CD8-positive, alpha-beta T cell (primary cell): ENCODE measurements at regions of chr1 and their contacts with region 1.

Region 1: DNA sequence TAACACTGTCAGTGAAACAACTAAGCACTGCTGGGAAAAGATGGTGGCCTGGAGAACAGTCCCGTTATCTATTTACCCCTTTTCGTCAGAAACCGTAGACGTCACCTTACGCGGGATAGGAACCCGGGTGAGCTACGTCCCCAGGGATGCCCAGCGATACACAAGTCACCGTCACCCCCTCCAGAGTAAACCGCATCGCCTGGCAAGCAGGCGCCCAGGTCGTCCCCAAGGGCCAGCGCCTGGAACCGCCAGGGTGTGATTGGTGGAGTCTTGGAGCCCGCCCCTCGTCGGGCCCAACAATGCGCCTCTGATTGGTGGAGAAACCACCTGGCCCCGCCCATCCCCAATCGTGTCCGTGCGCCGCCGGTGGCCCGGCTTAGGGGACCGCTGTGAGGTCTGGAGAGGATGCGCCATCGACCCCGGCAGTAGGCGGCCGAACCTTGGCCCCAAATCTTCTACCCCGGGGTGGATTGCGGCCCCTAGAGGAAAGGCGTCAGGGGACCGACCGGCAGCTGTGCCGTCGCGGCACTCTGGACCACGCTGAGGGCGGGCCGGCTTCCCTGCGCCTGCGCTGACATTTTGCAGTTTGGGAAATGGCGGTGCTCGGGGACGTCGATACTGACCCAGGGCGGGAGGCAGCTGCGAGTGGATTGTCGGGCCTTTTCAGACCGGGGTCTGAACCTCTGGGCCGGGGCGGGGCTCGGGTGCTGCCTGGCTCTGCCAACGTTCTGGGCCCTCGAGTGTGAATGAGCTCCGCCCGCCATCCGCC is 34.4 kb downstream of the SLC2A1 start:
- DNase-seq: peak; percentile 78 to 94 (median 91)
- ATAC-seq: peak; percentile 90
- H3K4me3 ChIP-seq: peak overlapping the region; percentile 90 to 96
- H3K4me3 Mint-ChIP-seq: peak overlapping the region; percentile 95
- H3K27ac ChIP-seq: peak overlapping the region; percentile 83 to 91
- H3K27ac Mint-ChIP-seq: peak overlapping the region; percentile 98
- H3K4me1 ChIP-seq: peaks cover 15% of the 10 kb centered on the region
- H3K4me1 Mint-ChIP-seq: peaks cover 35% of the 10 kb centered on the region
- H3K27me3 ChIP-seq: no peaks in the 10 kb centered on the region
- H3K27me3 Mint-ChIP-seq: no peaks in the 10 kb centered on the region
- CTCF ChIP-seq: no peak

Region 2: GRCh38 chr1:42462828-42463763 is 461.2 kb before region 1 on chr1 and contains the start of gene CCDC30:
- CTCF ChIA-PET with region 1: no interaction called
- POLR2A ChIA-PET with region 1: no interaction called
- intact Hi-C with region 1: loop called (anchors 5 to 10 kb)
- DNase-seq: peak; percentile 92 to 99 (median 94)
- ATAC-seq: peak; percentile 98
- H3K4me3 ChIP-seq: peak within 1 kb of the TSS; percentile 60 to 62
- H3K4me3 Mint-ChIP-seq: peak within 1 kb of the TSS; percentile 84
- H3K27ac ChIP-seq: peak within 1 kb of the TSS; percentile 70 to 83
- H3K27ac Mint-ChIP-seq: peak within 1 kb of the TSS; percentile 93
- H3K4me1 ChIP-seq: peaks cover 23% of the 10 kb centered on the region
- H3K4me1 Mint-ChIP-seq: peaks cover 40% of the 10 kb centered on the region
- H3K27me3 ChIP-seq: no peaks in the 10 kb centered on the region
- H3K27me3 Mint-ChIP-seq: no peaks in the 10 kb centered on the region
- CTCF ChIP-seq: no peak
- total RNA-seq, gene CCDC30: 2.5 to 2.8 TPM

Region 3: DNA sequence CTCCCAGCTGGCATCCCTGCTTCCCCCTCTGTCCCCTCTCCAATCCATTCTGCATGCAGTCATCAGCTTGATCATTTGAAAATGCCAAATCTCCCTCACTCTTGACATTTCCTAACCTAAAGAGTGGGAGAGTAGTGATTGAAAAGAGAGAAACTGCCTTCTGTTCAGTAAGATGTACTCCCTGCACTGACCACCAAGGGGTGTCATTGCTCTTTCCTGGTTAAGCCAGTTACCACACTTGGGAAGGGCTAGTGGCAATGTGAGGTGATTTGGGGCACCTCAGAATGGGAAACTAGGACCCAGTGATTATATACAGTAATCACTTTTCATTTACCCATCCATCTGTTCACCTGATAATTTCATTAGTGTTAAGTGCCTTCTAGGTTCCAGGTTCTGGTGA is 146.4 kb before region 1 on chr1:
- CTCF ChIA-PET with region 1: interaction called, 17 read pairs
- POLR2A ChIA-PET with region 1: no interaction called
- intact Hi-C with region 1: no loop called
- DNase-seq: peak in 5 of 9 experiments; percentile 21 to 52 (median 27)
- ATAC-seq: peak; percentile 68
- H3K4me3 ChIP-seq: no peak overlapping the region
- H3K4me3 Mint-ChIP-seq: no peak overlapping the region
- H3K27ac ChIP-seq: no peak overlapping the region
- H3K27ac Mint-ChIP-seq: no peak overlapping the region
- H3K4me1 ChIP-seq: no peaks in the 10 kb centered on the region
- H3K4me1 Mint-ChIP-seq: peaks cover 10% of the 10 kb centered on the region
- H3K27me3 ChIP-seq: no peaks in the 10 kb centered on the region
- H3K27me3 Mint-ChIP-seq: no peaks in the 10 kb centered on the region
- CTCF ChIP-seq: peak; percentile 57

Region 4: DNA sequence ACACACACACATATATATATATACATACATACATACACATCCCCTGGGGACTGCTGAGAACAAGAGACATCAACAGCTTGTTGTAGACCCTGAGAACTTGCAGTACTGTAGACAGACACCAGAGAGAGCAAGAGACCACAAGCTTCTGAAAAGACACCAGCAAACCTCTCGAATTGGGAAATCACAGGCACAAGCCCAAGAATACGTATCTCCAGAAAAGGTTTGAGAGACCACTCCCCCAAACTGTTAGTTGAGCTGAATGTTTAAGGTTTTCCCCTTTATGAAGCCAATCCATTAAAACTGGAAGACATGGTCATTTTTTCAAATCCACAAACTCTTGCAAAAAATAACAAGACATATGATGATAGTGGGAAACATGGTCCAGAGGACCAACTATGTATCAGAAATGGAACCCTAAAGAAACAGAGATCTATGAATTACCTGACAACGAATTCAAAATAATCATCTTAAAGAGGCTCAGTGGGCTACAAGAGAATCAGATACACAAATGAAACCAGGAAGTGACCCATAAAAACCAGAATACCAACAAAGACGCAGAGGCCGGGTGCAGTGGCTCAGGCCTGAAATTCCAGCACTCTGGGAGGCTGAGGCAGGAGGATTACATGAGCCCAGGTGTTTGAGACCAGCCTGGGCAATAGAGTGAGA is 10.7 kb before region 1 on chr1:
- CTCF ChIA-PET with region 1: interaction called, 62 read pairs
- POLR2A ChIA-PET with region 1: interaction called, 17 read pairs
- intact Hi-C with region 1: loop called in 1 of 2 experiments (anchors 1 kb)
- DNase-seq: peak in 6 of 9 experiments; percentile 45 to 87 (median 64)
- ATAC-seq: peak; percentile 99
- H3K4me3 ChIP-seq: no peak overlapping the region
- H3K4me3 Mint-ChIP-seq: no peak overlapping the region
- H3K27ac ChIP-seq: no peak overlapping the region
- H3K27ac Mint-ChIP-seq: no peak overlapping the region
- H3K4me1 ChIP-seq: no peaks in the 10 kb centered on the region
- H3K4me1 Mint-ChIP-seq: peaks cover 4% of the 10 kb centered on the region
- H3K27me3 ChIP-seq: no peaks in the 10 kb centered on the region
- H3K27me3 Mint-ChIP-seq: peaks cover 3% of the 10 kb centered on the region
- CTCF ChIP-seq: peak; percentile 85

Region 5: DNA sequence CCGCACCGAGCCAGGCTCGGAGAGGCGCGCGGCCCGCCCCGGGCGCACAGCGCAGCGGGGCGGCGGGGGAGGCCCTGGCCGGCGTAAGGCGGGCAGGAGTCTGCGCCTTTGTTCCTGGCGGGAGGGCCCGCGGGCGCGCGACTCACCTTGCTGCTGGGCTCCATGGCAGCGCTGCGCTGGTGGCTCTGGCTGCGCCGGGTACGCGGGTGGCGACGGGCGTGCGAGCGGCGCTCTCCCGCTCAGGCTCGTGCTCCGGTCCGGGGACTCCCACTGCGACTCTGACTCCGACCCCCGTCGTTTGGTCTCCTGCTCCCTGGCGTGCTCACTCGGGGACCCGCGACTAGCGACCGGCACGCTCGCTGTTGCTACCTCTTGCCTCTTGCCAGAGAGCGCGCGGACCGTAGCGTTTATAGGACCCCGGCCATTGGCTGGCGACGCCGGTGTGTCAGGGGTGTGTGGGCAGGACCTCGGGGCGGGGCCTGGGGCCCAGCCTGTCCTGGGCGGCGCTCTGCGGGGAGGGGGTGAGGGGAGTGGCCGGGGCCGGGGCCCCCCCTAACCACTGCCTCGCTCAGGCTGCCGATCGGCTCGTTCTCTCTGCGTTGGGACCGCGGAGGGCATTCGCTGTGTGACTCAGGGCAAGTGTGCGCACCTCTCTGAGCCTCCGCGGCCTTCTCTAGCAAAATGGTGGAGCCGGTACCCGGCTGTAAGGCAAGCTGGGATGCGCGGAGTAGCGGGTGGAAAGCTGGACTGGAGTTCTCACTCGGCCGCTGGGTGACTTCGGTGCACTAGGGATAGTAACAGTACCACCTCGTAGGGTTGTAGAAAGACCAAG is 34.4 kb after region 1 on chr1 and contains the start of gene SLC2A1:
- CTCF ChIA-PET with region 1: interaction called, 14 read pairs
- POLR2A ChIA-PET with region 1: interaction called, 7 read pairs
- intact Hi-C with region 1: loop called (anchors 1 kb)
- DNase-seq: peak; percentile 92 to 98 (median 96)
- ATAC-seq: peak; percentile 90
- H3K4me3 ChIP-seq: peak within 1 kb of the TSS; percentile 79 to 96
- H3K4me3 Mint-ChIP-seq: peak within 1 kb of the TSS; percentile 98
- H3K27ac ChIP-seq: peak within 1 kb of the TSS; percentile 76 to 86
- H3K27ac Mint-ChIP-seq: peak within 1 kb of the TSS; percentile 99
- H3K4me1 ChIP-seq: peaks cover 42% of the 10 kb centered on the region
- H3K4me1 Mint-ChIP-seq: peaks cover 51% of the 10 kb centered on the region
- H3K27me3 ChIP-seq: no peaks in the 10 kb centered on the region
- H3K27me3 Mint-ChIP-seq: no peaks in the 10 kb centered on the region
- CTCF ChIP-seq: no peak
- total RNA-seq, gene SLC2A1: 85.0 to 97.2 TPM

Region 6: DNA sequence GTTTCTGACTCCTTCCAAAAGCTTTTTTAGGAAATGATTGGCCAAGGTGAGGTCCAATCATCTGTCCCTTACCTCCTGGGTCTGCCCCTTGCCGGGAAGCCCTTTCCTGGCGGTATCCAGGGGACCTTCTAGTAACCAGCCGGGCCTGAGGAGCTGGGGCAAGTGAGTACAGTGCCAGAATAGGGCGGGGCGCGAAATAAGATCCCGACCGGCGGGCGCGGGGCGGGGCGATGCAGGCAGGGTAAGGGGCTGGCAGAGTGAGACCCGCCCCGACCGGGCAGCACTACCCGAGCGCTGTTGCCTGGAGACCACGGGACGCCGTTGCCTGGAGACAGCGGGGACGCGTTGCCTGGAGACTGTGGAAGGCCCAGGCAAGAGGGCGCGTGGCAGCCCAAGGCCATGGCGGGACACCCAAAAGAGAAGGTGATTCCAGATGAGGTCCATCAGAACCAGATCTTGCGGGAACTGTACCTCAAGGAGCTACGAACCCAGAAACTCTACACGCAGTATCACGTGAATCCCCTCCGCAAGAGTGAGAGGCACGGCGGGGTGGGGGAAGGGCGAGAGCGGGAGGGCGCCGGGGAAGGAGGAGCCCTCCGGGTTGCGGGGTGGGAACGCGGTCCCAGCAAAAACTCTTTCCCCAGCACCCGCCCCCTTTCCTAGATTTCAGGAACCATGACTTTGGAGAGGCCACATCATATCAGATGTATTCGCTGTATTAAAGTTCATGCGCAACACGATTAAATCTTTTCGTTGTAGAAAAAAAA is 223.5 kb after region 1 on chr1:
- CTCF ChIA-PET with region 1: no interaction called
- POLR2A ChIA-PET with region 1: no interaction called
- intact Hi-C with region 1: no loop called
- DNase-seq: peak in 4 of 9 experiments; percentile 15 to 25 (median 19)
- ATAC-seq: peak; percentile 36
- H3K4me3 ChIP-seq: peak overlapping the region; percentile 9 to 30
- H3K4me3 Mint-ChIP-seq: peak overlapping the region; percentile 6
- H3K27ac ChIP-seq: no peak overlapping the region
- H3K27ac Mint-ChIP-seq: no peak overlapping the region
- H3K4me1 ChIP-seq: peaks cover 10% of the 10 kb centered on the region
- H3K4me1 Mint-ChIP-seq: peaks cover 8% of the 10 kb centered on the region
- H3K27me3 ChIP-seq: peaks cover 14% of the 10 kb centered on the region in 2 experiments
- H3K27me3 Mint-ChIP-seq: peaks cover 69% of the 10 kb centered on the region
- CTCF ChIP-seq: no peak

Region 7: DNA sequence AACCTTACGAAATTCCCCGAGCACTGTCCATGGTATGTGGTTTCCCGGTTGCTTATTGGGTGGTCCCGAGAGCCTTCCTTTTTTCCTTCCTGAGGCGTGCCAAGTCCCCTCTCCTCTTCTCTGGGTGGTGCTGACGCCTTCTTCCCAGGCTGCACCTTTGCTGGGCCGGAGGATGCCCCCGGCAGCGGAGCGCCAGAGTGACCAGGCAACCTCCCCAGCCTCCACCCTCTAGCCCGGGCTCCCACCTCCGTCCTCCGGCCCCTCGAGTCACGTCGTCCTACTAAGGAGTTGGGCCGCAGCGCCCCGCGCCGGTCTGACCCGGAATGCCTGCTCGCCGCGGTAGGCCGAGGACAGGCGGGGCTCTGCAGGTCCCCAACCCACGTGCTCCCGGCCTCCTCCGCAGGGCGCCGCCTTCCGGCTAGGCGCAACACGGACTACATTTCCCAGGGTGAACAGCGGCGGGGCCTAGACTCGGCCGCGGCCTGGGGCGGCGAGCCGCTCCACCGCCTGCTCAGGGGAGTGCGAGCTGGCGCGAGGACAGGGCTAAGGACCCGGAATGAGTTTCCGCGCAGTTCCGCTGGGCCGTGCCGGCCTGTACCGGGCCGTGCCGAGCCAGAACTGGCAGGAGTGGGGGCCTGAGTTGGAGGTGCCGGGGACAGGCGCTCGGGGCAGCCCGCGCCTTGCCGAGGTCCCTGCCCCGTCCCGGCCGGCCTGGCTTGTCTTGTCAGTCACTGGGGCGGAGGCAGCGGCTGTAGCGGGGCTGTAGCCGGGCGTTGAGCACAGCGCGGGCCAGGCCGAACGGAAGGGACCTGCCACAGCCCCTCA is 1022.2 kb after region 1 on chr1 and contains the start of gene IPO13:
- CTCF ChIA-PET with region 1: no interaction called
- POLR2A ChIA-PET with region 1: no interaction called
- intact Hi-C with region 1: loop called in 1 of 2 experiments (anchors 5 kb)
- DNase-seq: peak; percentile 89 to 97 (median 94)
- ATAC-seq: peak; percentile 95
- H3K4me3 ChIP-seq: peak within 1 kb of the TSS; percentile 90 to 98
- H3K4me3 Mint-ChIP-seq: peak within 1 kb of the TSS; percentile 88
- H3K27ac ChIP-seq: peak within 1 kb of the TSS; percentile 92 to 99
- H3K27ac Mint-ChIP-seq: peak within 1 kb of the TSS; percentile 96
- H3K4me1 ChIP-seq: peaks cover 22% of the 10 kb centered on the region
- H3K4me1 Mint-ChIP-seq: peaks cover 63% of the 10 kb centered on the region
- H3K27me3 ChIP-seq: no peaks in the 10 kb centered on the region
- H3K27me3 Mint-ChIP-seq: no peaks in the 10 kb centered on the region
- CTCF ChIP-seq: peak; percentile 54
- total RNA-seq, gene IPO13: 6.5 to 8.1 TPM